ENCODE measurements at regions of chr12 and their contacts with region 1.

Region 1: GRCh38 chr12:79407671-79408622 is 282.8 kb downstream of the PAWR start:
- DNase-seq: peak; percentile 82
- H3K4me3 Mint-ChIP-seq: peak overlapping the region; percentile 29
- H3K27ac Mint-ChIP-seq: peak overlapping the region; percentile 48
- H3K4me1 Mint-ChIP-seq: peaks cover 30% of the 10 kb centered on the region
- H3K27me3 Mint-ChIP-seq: no peaks in the 10 kb centered on the region
- CTCF ChIP-seq: peak; percentile 62

Region 2: GRCh38 chr12:79143803-79144202 is 264.1 kb before region 1 on chr12:
- CTCF ChIA-PET with region 1: no interaction called
- intact Hi-C with region 1: no loop called
- DNase-seq: no peak
- H3K4me3 Mint-ChIP-seq: no peak overlapping the region
- H3K27ac Mint-ChIP-seq: no peak overlapping the region
- H3K4me1 Mint-ChIP-seq: no peaks in the 10 kb centered on the region
- H3K27me3 Mint-ChIP-seq: no peaks in the 10 kb centered on the region
- CTCF ChIP-seq: no peak

Region 3: GRCh38 chr12:79737875-79738718 is 330.1 kb after region 1 on chr12:
- CTCF ChIA-PET with region 1: interaction called, 6 read pairs
- intact Hi-C with region 1: loop called (anchors 1 kb)
- DNase-seq: peak; percentile 67
- H3K4me3 Mint-ChIP-seq: no peak overlapping the region
- H3K27ac Mint-ChIP-seq: no peak overlapping the region
- H3K4me1 Mint-ChIP-seq: no peaks in the 10 kb centered on the region
- H3K27me3 Mint-ChIP-seq: no peaks in the 10 kb centered on the region
- CTCF ChIP-seq: peak; percentile 40

Region 4: DNA sequence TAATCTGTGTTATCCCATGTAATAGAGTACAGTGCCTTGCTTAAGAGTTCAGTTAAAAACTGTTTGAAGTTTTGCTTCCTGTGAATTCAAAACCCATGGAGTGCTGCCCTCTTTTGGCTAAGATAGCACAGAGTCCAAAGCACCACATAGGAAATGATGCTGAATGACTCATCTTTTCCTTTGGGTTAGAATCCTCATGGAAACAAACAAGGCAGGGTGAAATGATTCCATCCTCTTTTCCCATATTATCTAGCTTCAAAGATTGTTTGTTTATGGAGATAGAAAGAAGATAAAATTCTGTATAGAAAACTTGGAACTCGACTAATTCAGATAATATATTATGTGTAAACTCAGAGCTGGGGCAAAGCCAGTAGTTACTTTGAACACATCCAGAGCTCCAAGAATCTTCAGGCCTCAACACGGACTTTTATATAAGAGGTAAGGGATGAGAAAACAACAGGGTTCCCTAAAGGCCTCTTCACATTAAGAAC is 778.8 kb after region 1 on chr12:
- CTCF ChIA-PET with region 1: no interaction called
- intact Hi-C with region 1: loop called (anchors 1 kb)
- DNase-seq: peak; percentile 72
- H3K4me3 Mint-ChIP-seq: no peak overlapping the region
- H3K27ac Mint-ChIP-seq: no peak overlapping the region
- H3K4me1 Mint-ChIP-seq: no peaks in the 10 kb centered on the region
- H3K27me3 Mint-ChIP-seq: no peaks in the 10 kb centered on the region
- CTCF ChIP-seq: peak; percentile 45

Region 5: GRCh38 chr12:80400571-80400991 is 992.6 kb after region 1 on chr12:
- CTCF ChIA-PET with region 1: no interaction called
- intact Hi-C with region 1: loop called (anchors 10 kb)
- DNase-seq: no peak
- H3K4me3 Mint-ChIP-seq: peak overlapping the region; percentile 35
- H3K27ac Mint-ChIP-seq: no peak overlapping the region
- H3K4me1 Mint-ChIP-seq: peaks cover 8% of the 10 kb centered on the region
- H3K27me3 Mint-ChIP-seq: no peaks in the 10 kb centered on the region
- CTCF ChIP-seq: no peak

Measured in Calu3 (cell line).